AG04449 (cell line): ENCODE measurements at regions of chr13 and their contacts with region 1.

Region 1: GRCh38 chr13:25375727-25376358 is 4.1 kb downstream of the ATP8A2 start:
- DNase-seq: peak; percentile 4
- H3K4me3 ChIP-seq: no peak overlapping the region
- CTCF ChIP-seq: peak; percentile 60

Region 2: DNA sequence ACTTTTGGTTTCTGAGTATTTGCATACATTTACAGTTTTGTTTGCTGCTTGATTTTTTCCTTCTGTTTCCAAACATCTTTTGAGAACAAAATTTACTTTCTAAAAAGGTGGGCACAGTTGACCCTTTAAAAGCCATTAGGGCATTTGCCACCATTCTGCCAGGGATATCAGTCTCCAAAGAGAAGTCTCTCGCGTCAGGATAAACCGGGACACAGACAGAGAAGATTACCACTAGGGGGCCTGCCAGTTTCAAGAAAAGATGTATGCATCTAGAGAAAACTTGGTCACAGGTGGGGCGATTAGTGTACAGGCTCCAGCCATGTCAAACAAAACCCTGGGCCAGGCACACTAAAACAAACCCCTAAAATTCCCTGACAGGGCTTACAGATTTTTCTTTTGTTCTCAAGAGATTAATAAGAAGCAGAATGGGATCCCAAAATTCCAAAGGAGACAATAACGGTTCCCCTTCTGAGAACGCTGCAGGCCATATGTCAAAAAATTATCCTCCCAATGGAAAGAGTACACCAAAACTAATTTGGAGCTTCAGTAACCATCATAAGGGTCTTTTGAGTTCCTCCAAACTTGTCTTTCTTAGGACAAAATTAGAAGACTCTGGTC is 290.6 kb before region 1 on chr13:
- CTCF ChIA-PET with region 1: interaction called, 10 read pairs
- POLR2A ChIA-PET with region 1: no interaction called
- DNase-seq: no peak
- H3K4me3 ChIP-seq: no peak overlapping the region
- CTCF ChIP-seq: peak; percentile 53

Region 3: GRCh38 chr13:25232937-25233515 is 142.8 kb before region 1 on chr13:
- CTCF ChIA-PET with region 1: interaction called, 36 read pairs
- POLR2A ChIA-PET with region 1: no interaction called
- DNase-seq: no peak
- H3K4me3 ChIP-seq: no peak overlapping the region
- CTCF ChIP-seq: peak; percentile 36

Region 4: DNA sequence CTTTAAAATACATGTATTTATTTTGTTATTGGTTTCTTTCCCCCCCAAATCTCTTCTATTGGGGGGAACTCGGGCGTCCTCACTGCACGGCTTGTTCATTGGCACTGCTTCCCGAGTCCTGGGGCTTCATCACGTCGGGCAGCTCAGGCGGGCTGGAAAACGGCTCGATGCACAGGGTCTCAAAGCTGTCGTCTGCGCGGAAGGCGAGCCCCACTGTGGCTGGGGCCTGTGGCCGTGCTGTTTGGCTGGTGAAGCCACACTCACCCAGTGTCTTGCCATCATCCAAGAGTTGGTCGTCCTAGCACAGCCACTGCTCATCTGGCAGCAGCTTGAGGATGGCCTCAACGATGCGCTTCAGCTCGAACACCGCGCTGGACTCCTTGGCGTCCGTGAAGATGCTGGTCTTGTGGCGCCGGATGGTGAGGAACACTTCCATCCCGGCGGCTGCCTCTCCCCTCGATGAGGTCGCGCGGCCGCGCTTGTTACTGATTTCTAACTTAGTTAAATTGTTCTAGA is 10.1 kb before region 1 on chr13:
- CTCF ChIA-PET with region 1: interaction called, 11 read pairs
- POLR2A ChIA-PET with region 1: no interaction called
- DNase-seq: no peak
- H3K4me3 ChIP-seq: no peak overlapping the region
- CTCF ChIP-seq: no peak

Region 5: GRCh38 chr13:25391932-25392331 is 16.1 kb after region 1 on chr13:
- CTCF ChIA-PET with region 1: interaction called, 18 read pairs
- POLR2A ChIA-PET with region 1: no interaction called
- DNase-seq: no peak
- H3K4me3 ChIP-seq: no peak overlapping the region
- CTCF ChIP-seq: no peak